Activated CD8-positive, alpha-beta T cell treated with anti-CD3 and anti-CD28 coated beads, Interleukin-2, amount 10 ng/mL, durations not matched to agents 7 days and 5 days (primary cell): ENCODE measurements at regions of chr12 and their contacts with region 1.

Region 1: GRCh38 chr12:89542912-89543592 is 17.2 kb upstream of the POC1B start:
- DNase-seq: peak; percentile 80
- ATAC-seq: peak; percentile 82
- H3K4me3 Mint-ChIP-seq: no peak overlapping the region
- H3K27ac Mint-ChIP-seq: no peak overlapping the region
- H3K4me1 Mint-ChIP-seq: peaks cover 4% of the 10 kb centered on the region
- H3K27me3 Mint-ChIP-seq: no peaks in the 10 kb centered on the region

Region 2: GRCh38 chr12:89556976-89557375 is 13.9 kb after region 1 on chr12:
- CTCF ChIA-PET with region 1: interaction called, 17 read pairs
- POLR2A ChIA-PET with region 1: no interaction called
- DNase-seq: no peak
- ATAC-seq: no peak
- H3K4me3 Mint-ChIP-seq: no peak overlapping the region
- H3K27ac Mint-ChIP-seq: no peak overlapping the region
- H3K4me1 Mint-ChIP-seq: no peaks in the 10 kb centered on the region
- H3K27me3 Mint-ChIP-seq: no peaks in the 10 kb centered on the region

Region 3: DNA sequence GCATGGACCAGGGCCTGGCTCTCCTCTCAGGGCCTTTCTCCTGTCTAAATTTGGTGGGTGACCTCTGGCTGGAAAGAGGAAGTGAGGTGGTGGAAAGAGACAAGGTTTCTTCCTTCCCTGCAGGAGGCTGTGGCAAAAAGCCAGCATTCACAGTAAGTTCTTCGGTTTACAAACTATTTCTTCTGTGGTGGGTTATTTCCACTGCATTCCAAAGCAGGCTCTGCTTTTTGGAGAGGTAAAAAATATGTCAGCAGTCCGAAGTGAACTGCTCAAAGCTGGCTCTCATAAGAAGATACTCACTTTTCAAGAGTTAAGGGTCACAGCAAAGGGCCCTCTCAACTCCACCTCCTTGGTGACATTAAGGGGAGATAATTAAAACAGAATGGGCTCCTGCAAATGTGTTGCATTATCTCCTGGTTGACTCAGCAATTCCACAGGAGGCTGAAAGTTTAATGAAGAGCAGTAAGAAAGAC is 31.7 kb after region 1 on chr12:
- CTCF ChIA-PET with region 1: no interaction called
- POLR2A ChIA-PET with region 1: no interaction called
- DNase-seq: no peak
- ATAC-seq: no peak
- H3K4me3 Mint-ChIP-seq: no peak overlapping the region
- H3K27ac Mint-ChIP-seq: no peak overlapping the region
- H3K4me1 Mint-ChIP-seq: no peaks in the 10 kb centered on the region
- H3K27me3 Mint-ChIP-seq: no peaks in the 10 kb centered on the region

Region 4: GRCh38 chr12:89709157-89709994 is 166.3 kb after region 1 on chr12:
- CTCF ChIA-PET with region 1: interaction called, 12 read pairs
- POLR2A ChIA-PET with region 1: no interaction called
- DNase-seq: peak; percentile 99
- ATAC-seq: peak; percentile 79
- H3K4me3 Mint-ChIP-seq: peak overlapping the region; percentile 83
- H3K27ac Mint-ChIP-seq: peak overlapping the region; percentile 89
- H3K4me1 Mint-ChIP-seq: peaks cover 26% of the 10 kb centered on the region
- H3K27me3 Mint-ChIP-seq: peaks cover 3% of the 10 kb centered on the region

Region 5: GRCh38 chr12:90013409-90013808 is 470.4 kb after region 1 on chr12:
- CTCF ChIA-PET with region 1: interaction called, 11 read pairs
- POLR2A ChIA-PET with region 1: no interaction called
- DNase-seq: no peak
- ATAC-seq: no peak
- H3K4me3 Mint-ChIP-seq: no peak overlapping the region
- H3K27ac Mint-ChIP-seq: no peak overlapping the region
- H3K4me1 Mint-ChIP-seq: no peaks in the 10 kb centered on the region
- H3K27me3 Mint-ChIP-seq: peaks cover 4% of the 10 kb centered on the region

Region 6: DNA sequence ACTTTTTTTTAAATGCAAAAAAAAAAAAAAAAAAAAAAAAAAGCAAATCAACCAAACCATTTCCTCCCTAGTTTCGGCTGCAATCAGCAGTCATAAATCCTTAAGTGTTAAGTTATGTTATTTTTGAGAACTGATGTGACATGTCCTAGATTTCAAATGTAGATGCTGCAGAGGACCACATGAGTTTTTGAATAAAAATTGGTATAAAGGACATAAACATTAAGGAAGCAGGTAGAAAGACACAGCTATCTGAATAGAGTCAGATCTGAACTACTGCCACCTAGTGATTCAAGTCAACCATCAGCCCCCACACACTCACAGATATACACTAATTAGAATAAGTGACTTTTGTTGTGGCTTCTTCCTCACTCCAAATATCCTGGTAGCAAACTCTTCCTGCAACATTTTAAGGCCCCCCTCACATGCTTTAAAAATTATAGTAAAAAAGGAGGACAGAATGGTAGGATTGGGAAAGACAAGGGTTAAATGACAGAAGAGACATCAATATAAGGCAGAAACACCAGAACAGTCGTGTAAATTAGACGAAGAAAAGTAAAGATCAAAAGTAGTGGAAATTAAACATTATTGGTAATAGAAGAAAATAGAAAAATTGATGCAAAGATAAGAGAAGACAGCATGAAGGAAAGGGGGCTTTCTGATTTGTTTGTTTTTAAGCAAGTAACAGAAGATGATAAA is 560.1 kb after region 1 on chr12:
- CTCF ChIA-PET with region 1: interaction called, 15 read pairs
- POLR2A ChIA-PET with region 1: no interaction called
- DNase-seq: peak; percentile 34
- ATAC-seq: peak; percentile 76
- H3K4me3 Mint-ChIP-seq: no peak overlapping the region
- H3K27ac Mint-ChIP-seq: no peak overlapping the region
- H3K4me1 Mint-ChIP-seq: peaks cover 6% of the 10 kb centered on the region
- H3K27me3 Mint-ChIP-seq: peaks cover 14% of the 10 kb centered on the region